ENCODE measurements at regions of chr1 and their contacts with region 1.

Region 1: GRCh38 chr1:92951141-92951582 is 10.1 kb downstream of the DIPK1A start:
- DNase-seq: no peak
- ATAC-seq: peak; percentile 79
- H3K4me3 Mint-ChIP-seq: no peak overlapping the region
- H3K27ac Mint-ChIP-seq: no peak overlapping the region
- H3K4me1 Mint-ChIP-seq: peaks cover 34% of the 10 kb centered on the region
- H3K27me3 Mint-ChIP-seq: no peaks in the 10 kb centered on the region
- CTCF ChIP-seq: no peak

Region 2: GRCh38 chr1:92916902-92917301 is 34.3 kb before region 1 on chr1:
- CTCF ChIA-PET with region 1: interaction called, 7 read pairs
- POLR2A ChIA-PET with region 1: no interaction called
- intact Hi-C with region 1: loop called (anchors 5 kb)
- DNase-seq: no peak
- ATAC-seq: no peak
- H3K4me3 Mint-ChIP-seq: no peak overlapping the region
- H3K27ac Mint-ChIP-seq: no peak overlapping the region
- H3K4me1 Mint-ChIP-seq: peaks cover 59% of the 10 kb centered on the region
- H3K27me3 Mint-ChIP-seq: no peaks in the 10 kb centered on the region
- CTCF ChIP-seq: no peak

Region 3: DNA sequence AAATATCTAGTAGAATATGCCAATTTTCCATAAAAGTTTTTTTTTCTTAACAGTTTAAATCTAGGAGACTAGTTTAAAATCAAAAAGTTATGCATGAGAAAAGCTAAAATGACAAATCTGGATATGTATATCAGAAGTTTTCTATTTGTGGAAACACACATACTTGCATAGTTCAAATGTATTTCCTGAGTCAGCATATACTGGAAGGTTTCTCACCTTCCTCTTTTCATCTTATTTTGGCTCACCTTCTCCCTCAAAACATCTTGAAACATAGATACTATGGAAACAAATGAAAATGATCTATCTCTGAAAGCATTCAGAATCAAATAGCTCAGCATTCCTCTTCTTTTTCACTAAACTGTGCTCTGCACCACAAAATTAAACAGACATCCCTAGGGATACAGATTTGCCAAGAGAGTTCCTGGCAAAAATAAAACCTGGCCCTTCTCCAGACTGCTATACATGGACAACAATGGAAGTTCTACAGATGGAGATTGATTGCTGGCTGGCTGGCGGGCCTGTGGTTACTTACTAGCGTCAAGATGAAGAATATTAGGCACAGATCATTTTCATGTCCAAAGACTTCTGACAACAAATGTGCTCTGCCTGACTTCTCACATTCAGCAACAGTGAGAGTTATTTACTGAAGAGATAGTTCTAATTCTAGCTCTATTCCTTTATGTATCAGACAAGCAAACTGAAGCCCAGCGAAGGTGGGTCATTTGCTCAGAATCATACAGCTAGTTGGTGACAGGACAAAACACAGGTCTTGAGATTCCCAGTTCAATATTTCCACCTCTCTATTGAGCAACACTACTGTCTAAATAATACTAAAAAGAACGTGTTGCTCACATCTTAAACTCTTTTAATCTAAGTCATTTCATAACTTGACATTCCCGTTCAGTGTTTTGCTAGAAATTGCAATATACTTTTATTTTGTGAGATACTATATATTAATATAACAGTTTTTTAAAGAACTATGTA is 16.5 kb before region 1 on chr1:
- CTCF ChIA-PET with region 1: interaction called, 3 read pairs
- POLR2A ChIA-PET with region 1: no interaction called
- intact Hi-C with region 1: loop called (anchors 2 kb)
- DNase-seq: no peak
- ATAC-seq: no peak
- H3K4me3 Mint-ChIP-seq: peak overlapping the region; percentile 45
- H3K27ac Mint-ChIP-seq: peak overlapping the region; percentile 43
- H3K4me1 Mint-ChIP-seq: peaks cover 87% of the 10 kb centered on the region
- H3K27me3 Mint-ChIP-seq: no peaks in the 10 kb centered on the region
- CTCF ChIP-seq: no peak

Region 4: GRCh38 chr1:92975551-92976232 is 24.5 kb after region 1 on chr1:
- CTCF ChIA-PET with region 1: interaction called, 5 read pairs
- POLR2A ChIA-PET with region 1: interaction called, 14 read pairs
- intact Hi-C with region 1: no loop called
- DNase-seq: peak; percentile 48
- ATAC-seq: peak; percentile 73
- H3K4me3 Mint-ChIP-seq: peak overlapping the region; percentile 67
- H3K27ac Mint-ChIP-seq: peak overlapping the region; percentile 99
- H3K4me1 Mint-ChIP-seq: peaks cover 91% of the 10 kb centered on the region
- H3K27me3 Mint-ChIP-seq: no peaks in the 10 kb centered on the region
- CTCF ChIP-seq: no peak

Region 5: DNA sequence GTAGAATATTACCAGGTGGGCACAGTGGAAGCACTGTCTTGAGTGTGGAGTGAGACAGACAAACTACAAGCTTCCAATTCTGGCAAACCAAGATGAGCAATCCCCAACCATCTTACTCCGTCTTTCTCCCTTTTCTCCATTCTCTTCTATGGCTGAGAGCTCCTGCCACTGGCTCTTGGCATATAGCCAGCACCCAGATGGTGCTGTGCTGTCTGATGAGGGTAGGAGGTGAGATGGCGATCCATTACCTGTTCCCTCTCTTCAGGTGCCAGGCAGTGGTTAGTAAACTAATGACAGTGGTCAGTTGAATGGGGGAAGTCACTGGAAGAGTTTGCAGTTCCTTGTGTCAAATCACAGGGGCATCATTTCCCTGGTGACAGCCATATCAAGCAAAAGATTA is 605.1 kb after region 1 on chr1:
- CTCF ChIA-PET with region 1: no interaction called
- POLR2A ChIA-PET with region 1: no interaction called
- intact Hi-C with region 1: no loop called
- DNase-seq: no peak
- ATAC-seq: no peak
- H3K4me3 Mint-ChIP-seq: no peak overlapping the region
- H3K27ac Mint-ChIP-seq: no peak overlapping the region
- H3K4me1 Mint-ChIP-seq: peaks cover 23% of the 10 kb centered on the region
- H3K27me3 Mint-ChIP-seq: no peaks in the 10 kb centered on the region
- CTCF ChIP-seq: no peak

Measured in activated B cell treated with CpG ODN at 0.5 μM for 24 hours (primary cell).